Activated naive CD4-positive, alpha-beta T cell treated with anti-CD3 and anti-CD28 coated beads for 36 hours (primary cell): ENCODE measurements at regions of chr9 and their contacts with region 1.

Region 1: DNA sequence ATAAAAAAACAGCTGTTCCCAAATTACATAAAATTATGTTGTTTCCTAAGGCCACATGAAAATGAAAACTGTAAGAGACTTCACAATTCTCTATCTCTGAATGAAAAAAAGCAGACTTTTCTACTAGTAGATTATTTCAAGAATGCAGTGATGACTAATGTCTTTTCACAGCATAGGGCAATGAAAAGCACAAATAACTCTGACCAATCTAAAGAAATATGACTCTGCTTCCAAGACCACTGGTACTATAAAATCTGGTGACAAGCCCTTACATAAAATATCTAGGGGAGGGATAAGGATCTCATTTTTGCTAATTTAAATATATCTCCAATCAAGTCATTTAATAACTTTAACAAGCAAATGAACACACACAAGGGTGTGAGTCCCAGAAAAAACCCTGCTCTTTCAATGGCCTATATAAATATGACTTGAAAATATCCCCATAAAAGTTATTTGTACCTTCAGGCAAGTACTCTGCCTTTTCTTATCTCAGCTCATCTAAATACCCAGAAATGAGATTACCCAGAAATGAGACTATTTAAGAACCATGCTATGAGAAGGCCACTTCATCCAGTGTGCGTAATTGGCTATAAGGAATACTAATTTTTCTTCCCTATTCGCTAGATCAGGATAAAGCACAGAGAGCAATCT is 105.2 kb downstream of the GNAQ start:
- DNase-seq: no peak
- H3K4me3 Mint-ChIP-seq: no peak overlapping the region
- H3K27ac Mint-ChIP-seq: peak overlapping the region; percentile 11
- H3K4me1 Mint-ChIP-seq: peaks cover 13% of the 10 kb centered on the region
- H3K27me3 Mint-ChIP-seq: no peaks in the 10 kb centered on the region

Region 2: DNA sequence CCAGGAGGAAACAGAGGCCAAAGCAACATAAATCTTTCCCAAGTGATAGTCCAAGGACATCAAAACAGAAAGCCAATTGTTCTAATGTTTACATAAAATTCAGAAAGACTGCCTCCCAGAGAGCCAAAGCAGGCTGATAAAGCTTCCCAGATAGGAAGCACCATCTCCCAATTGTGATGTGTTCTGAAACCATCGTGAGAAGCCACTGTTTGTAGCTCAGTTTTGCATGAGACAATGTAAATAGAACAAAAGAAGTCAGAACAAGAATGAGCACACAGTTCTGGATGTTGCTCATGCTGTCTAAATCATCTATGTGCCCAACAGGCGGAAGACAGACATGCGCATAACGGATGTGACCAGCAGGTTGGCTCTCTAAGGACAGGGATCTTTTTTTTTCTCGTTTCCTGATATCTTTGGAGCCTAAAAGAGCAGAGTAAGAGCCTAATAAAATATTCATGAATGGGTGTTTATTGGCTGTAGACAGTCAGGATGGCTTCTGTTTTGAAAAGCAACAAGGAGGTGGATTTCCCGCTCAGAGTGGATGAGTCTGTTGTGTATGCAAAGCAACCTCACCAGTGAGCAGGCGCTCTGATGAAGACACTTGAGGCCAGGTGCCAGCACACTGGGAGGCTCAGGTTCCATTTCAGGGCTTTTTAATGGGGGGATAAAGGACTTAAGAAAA is 391.9 kb before region 1 on chr9:
- CTCF ChIA-PET with region 1: no interaction called
- intact Hi-C with region 1: no loop called
- DNase-seq: no peak
- H3K4me3 Mint-ChIP-seq: no peak overlapping the region
- H3K27ac Mint-ChIP-seq: no peak overlapping the region
- H3K4me1 Mint-ChIP-seq: no peaks in the 10 kb centered on the region
- H3K27me3 Mint-ChIP-seq: peaks cover 5% of the 10 kb centered on the region

Region 3: DNA sequence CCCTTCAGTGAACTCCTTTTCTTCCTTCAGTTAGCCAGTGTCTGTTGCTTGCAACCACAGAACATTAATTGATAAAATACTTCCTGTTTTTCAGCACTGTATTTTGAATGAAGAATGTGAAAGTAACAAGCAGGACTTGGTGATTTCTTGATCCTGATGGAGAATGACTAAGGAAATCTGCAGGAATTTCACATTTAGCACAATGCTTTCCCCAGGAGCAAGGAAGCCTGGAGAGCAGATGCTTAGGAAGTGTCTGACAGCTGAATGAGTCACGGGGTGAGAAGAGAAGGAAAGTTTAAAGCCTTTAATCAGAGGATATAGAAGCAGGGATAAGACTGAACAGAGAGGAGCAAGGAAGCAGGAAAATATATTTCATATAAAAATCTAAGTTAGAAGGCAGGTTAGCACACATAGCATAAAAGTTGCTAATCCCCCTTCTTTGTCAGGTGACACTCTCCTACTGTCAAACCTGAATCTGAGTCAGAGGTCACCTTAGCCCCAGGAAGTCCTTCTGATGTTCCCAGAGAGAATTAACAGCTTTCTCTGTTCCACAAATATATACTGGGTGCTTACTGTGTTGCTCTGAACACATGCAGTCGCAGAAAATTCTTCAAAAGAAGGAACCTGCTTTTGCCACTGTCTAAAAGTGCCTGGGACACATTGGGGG is 338.0 kb before region 1 on chr9:
- CTCF ChIA-PET with region 1: no interaction called
- intact Hi-C with region 1: no loop called
- DNase-seq: no peak
- H3K4me3 Mint-ChIP-seq: no peak overlapping the region
- H3K27ac Mint-ChIP-seq: no peak overlapping the region
- H3K4me1 Mint-ChIP-seq: no peaks in the 10 kb centered on the region
- H3K27me3 Mint-ChIP-seq: peaks cover 8% of the 10 kb centered on the region

Region 4: GRCh38 chr9:77807281-77807683 is 119.2 kb before region 1 on chr9:
- CTCF ChIA-PET with region 1: no interaction called
- intact Hi-C with region 1: no loop called
- DNase-seq: no peak
- H3K4me3 Mint-ChIP-seq: no peak overlapping the region
- H3K27ac Mint-ChIP-seq: no peak overlapping the region
- H3K4me1 Mint-ChIP-seq: peaks cover 22% of the 10 kb centered on the region
- H3K27me3 Mint-ChIP-seq: no peaks in the 10 kb centered on the region

Region 5: DNA sequence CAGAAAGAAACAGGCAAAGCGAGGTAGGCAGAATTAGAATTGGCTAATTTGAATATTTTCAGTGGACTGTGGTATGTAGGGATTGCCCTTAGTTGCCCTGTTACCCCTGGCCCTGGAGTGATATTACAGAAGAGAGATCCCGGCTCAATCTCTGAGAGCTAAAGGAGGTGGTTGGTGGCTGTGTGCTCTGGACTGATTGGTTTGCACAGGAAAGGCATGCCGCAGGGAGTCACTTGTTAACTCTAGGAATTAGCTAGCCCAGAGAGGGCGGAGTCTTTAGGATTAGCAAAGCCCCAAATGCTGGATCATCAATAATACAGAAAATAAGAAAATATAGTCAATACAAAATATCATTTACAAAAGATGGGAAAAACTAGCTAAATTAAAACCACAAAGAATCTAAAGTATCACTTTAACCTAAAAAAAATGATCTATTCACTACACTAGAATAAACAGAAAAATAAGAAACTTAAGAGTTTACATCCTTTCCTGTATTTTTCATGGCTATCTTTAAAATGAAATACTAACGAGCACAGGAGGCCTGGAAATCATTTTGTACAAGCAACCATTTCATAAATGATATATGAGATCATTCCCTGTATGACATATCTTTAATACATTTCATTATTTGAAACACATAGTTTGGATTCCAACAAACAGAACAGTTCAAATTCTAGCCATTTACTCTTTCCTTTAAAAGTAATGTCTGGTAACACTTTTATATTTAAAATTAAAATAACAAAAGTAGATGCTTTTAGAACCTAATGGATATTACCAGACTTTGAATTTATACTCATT is 34.1 kb after region 1 on chr9:
- CTCF ChIA-PET with region 1: no interaction called
- intact Hi-C with region 1: loop called (anchors 5 kb)
- DNase-seq: no peak
- H3K4me3 Mint-ChIP-seq: no peak overlapping the region
- H3K27ac Mint-ChIP-seq: no peak overlapping the region
- H3K4me1 Mint-ChIP-seq: peaks cover 50% of the 10 kb centered on the region
- H3K27me3 Mint-ChIP-seq: no peaks in the 10 kb centered on the region

Region 6: DNA sequence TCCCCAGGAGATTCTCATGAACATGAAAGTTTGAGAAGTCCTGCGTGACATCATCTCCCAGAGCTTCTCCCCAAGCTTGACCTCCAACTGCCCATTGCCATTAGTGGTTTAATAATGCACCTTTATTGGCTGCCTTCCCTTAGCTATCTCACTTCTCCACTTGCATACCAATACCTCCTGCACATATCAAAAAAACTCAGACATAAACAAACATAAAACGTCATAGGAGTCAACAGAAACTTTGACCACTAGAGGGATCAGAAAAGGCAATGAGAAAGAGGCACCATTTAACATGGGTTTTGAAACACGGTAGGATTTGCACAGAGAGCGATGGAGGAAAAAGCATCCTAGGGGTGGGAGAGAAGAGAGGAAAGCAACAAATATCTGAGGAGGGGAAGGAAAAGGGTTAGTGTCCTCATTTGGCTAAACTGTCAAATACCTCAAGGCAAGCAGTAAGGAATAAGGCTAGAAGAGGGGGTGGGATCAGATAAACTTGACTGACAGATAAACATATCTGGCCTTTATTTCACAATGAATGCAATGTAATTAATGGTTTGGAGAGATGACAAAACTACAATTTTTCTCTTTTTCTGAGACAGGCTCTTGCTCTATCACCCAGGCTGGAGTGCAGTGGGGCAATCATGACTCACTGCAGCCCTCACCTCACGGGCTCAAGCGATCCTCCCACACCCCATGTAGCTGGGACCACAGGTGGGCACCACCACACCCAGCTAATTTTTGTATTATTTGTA is 78.2 kb after region 1 on chr9:
- CTCF ChIA-PET with region 1: no interaction called
- intact Hi-C with region 1: no loop called
- DNase-seq: no peak
- H3K4me3 Mint-ChIP-seq: no peak overlapping the region
- H3K27ac Mint-ChIP-seq: no peak overlapping the region
- H3K4me1 Mint-ChIP-seq: peaks cover 53% of the 10 kb centered on the region
- H3K27me3 Mint-ChIP-seq: no peaks in the 10 kb centered on the region